ENCODE measurements at regions of chr11 and their contacts with region 1.

Region 1: DNA sequence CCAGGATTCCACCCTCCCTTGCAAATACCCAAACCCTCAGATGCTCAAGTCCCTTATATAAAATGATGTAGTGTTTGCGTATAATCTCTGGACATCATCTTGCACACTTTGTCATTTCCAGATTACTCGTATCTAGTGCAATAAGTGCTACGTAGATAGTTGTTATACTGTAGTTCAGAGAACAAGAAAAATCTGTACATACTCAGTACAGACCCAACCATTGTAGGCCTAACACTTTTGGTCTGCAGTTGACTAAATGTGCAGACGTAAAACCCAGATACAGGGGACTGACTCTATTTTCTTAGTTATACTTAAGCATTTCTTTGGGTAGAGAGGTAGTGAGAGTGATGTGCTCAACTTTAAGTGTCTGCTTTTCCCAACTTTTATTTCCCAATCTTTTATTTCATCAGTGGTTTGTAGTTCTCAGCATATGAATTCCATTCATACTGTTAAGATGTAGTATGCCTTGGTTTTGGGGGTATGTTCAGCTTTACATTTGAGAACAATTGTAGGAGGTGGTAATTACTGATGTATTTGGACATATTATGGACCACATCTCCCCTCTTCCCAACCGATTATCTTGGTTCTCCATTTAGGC is 43.9 kb downstream of the DDX6 start:
- DNase-seq: no peak
- H3K4me3 ChIP-seq: no peak overlapping the region
- H3K27ac ChIP-seq: no peak overlapping the region
- H3K4me1 ChIP-seq: no peaks in the 10 kb centered on the region
- H3K27me3 ChIP-seq: no peaks in the 10 kb centered on the region
- CTCF ChIP-seq: no peak
- POLR2A ChIP-seq: no peak

Region 2: GRCh38 chr11:118621071-118621783 is 125.9 kb before region 1 on chr11:
- intact Hi-C with region 1: no loop called
- DNase-seq: peak; percentile 87 to 90
- H3K4me3 ChIP-seq: peak overlapping the region; percentile 39 to 80 (median 56)
- H3K27ac ChIP-seq: peak overlapping the region; percentile 94 to 95
- H3K4me1 ChIP-seq: peaks cover 21 to 33% of the 10 kb centered on the region in 2 donors
- H3K27me3 ChIP-seq: no peaks in the 10 kb centered on the region
- CTCF ChIP-seq: no peak
- POLR2A ChIP-seq: no peak

Region 3: GRCh38 chr11:118785362-118785761 is 38.3 kb after region 1 on chr11:
- intact Hi-C with region 1: loop called (anchors 2 kb)
- DNase-seq: no peak
- H3K4me3 ChIP-seq: peak overlapping the region in 1 of 3 donors; percentile 48
- H3K27ac ChIP-seq: peak overlapping the region in 1 of 2 donors; percentile 4
- H3K4me1 ChIP-seq: peaks cover 2 to 12% of the 10 kb centered on the region in 2 donors
- H3K27me3 ChIP-seq: no peaks in the 10 kb centered on the region
- CTCF ChIP-seq: no peak
- POLR2A ChIP-seq: no peak

Region 4: DNA sequence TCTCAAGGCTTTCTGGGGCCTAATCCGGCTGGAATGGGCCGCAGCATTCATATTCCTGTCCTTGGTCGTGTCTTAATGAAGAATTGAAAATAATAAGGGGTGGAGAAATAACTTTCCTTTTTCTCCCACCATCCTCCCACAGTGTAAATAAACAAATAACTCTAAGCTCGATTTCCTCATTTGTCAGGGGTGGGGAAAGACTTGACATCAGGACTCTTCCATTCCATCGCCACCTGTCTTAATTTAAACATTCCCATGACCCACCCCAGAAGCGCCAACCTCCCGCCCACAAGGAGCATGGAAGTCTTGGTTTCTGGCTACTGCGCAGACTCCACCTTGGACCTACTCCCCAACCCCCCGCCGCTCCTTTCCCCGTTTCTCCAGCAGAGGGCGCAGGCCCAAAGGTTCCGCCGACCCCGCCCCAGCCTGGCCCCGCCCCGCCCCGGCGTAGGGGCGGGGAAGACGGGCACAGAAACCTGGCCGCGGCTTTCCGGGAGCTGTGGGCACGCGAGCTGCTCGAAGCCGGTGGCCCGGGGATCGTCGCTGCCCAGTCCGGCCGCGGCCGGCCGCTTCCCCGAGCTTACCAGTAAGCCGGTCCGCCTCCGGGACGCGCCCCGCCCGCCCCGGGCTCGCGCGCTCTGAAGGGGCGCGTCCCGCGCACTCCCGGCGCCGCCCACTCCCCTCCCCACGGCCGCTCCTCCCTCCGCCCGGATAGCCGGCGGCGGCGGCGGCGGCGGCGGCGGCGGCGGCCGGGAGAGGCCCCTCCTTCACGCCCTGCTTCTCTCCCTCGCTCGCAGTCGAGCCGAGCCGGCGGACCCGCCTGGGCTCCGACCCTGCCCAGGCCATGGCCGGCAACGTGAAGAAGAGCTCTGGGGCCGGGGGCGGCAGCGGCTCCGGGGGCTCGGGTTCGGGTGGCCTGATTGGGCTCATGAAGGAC is 458.8 kb after region 1 on chr11 and contains the start of gene CBL:
- intact Hi-C with region 1: no loop called
- DNase-seq: peak; percentile 91 to 97
- H3K4me3 ChIP-seq: peak within 1 kb of the TSS; percentile 80 to 90 (median 89)
- H3K27ac ChIP-seq: peak within 1 kb of the TSS; percentile 94 to 97
- H3K4me1 ChIP-seq: no peaks in the 10 kb centered on the region
- H3K27me3 ChIP-seq: no peaks in the 10 kb centered on the region
- CTCF ChIP-seq: peak; percentile 67 to 95 (median 94)
- POLR2A ChIP-seq: no peak
- total RNA-seq, gene CBL: 13.1 to 17.0 (median 14.3) TPM